ENCODE measurements at regions of chr19 and their contacts with region 1.

Region 1: DNA sequence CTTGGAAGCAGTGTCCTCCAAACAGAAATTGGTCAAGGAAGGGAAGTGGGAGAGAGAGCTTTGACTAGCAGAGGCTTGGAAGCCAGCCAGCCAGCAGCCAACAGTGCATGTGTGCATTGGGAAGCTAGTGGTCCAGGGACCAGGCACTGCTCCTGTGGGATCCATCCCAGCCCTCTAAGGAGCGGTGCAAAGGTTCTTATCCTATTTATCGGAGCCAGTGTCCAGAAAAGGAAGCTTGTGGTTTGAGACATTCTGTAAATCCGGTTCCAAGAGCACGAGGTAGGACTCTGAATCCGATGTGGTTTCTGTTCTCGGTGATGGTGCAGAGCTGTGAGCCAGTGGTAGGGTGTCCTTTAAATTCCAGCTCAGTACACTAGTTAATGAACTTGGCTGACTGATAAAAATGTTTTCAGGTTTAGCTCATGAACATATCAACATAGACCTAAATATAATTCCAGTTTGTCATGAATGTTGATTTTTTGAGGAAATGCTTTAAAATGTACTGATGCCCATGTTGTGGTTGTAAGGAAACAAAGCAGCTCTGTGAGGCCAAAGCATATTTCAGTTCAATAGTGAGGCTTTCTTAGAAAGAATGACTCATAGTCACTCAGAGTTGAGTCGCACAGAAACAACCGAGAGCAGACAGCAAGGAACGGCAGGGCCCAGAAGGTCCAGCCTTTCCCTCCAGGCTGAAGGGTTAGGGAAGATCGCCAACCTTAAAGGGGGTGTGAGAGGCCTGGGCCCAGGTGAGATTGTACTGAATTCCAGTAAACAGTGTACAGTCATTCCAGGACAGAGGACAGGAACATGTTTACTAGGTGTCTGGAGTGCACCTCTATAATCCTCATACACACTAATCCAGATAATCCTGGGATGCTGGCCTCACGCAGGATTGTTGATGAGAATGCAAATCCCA is 21.5 kb upstream of the GARRE1 start:
- DNase-seq: peak; percentile 83
- ATAC-seq: peak; percentile 93

Region 2: GRCh38 chr19:34134190-34135053 is 98.4 kb before region 1 on chr19:
- intact Hi-C with region 1: no loop called
- DNase-seq: peak; percentile 93
- ATAC-seq: peak; percentile 100

Region 3: DNA sequence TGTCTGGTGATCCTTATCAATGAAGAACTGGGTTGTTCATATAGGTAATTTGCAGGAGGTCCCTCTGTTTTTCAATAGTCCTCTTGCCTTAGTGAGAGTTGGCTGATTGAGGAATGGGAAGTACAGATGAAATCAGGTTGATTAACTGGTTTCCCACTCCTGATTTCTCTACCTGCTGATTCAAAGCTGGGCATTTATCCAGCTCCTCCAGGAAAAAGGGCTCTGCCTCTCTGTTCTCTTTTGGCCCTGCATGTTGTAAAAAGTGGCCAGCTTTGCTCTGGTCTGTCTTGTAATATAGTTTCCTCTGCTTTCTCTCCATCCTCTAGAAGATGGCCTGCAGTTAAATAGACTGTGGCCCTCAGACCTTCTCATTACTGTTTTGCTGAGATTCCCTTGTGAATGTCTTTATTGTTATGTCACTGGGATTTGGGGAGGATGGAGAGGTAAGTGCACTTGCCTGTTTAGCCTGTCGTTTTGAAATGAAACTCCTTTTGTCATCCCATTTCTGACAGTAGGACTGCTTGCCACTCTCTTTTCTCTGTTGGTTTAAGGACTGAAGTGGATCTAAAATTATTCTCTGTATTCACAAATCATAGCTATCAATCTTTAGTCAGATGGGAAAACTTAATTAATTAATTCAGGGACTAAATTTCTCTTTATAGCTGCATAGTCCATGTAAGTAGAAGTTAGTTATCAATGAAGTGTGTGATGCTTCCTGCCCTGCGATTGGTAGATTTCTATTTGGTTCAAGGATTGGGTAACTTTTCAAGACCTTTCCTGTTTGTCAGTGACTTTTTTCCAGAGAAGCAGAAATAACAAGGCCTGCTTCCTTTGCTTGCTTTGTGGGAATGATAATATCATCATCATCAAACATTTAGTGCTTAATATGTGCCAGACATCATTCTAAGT is 50.0 kb after region 1 on chr19:
- intact Hi-C with region 1: no loop called
- DNase-seq: no peak
- ATAC-seq: no peak

Region 4: DNA sequence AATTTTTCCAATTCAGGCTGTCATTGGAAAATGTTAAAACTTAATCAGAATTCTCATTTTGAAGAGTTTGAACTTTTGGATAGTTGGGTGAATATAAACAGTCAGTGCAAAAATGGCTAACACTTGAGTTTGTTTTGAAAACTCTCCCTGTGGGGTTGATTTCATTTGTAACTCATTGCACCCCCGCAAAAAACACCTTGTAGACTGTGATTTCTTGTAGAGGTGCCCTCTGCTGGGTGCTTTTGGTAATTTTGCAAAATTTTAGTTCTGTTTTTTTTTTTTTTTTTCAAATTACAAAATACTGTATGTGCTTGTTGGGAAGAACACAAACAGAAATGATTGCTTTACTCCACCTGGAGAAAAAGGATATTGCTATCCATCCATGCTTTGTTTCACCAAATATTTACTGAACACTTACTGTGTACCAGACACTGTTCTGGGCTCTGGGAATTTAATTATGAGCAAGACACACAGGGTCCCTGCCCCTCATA is 104.0 kb after region 1 on chr19:
- intact Hi-C with region 1: loop called (anchors 10 kb)
- DNase-seq: no peak
- ATAC-seq: peak; percentile 53

Region 5: GRCh38 chr19:34428549-34429285 is 195.9 kb after region 1 on chr19:
- intact Hi-C with region 1: no loop called
- DNase-seq: no peak
- ATAC-seq: peak; percentile 30

Region 6: GRCh38 chr19:35269421-35270117 is 1036.7 kb after region 1 on chr19:
- intact Hi-C with region 1: loop called (anchors 5 kb)
- DNase-seq: peak; percentile 93
- ATAC-seq: peak; percentile 64